PC-9 (cell line): ENCODE measurements at regions of chr11 and their contacts with region 1.

Region 1: GRCh38 chr11:59753650-59754493 is 1.3 kb upstream of the STX3 start:
- DNase-seq: peak; percentile 68 to 81
- H3K4me3 ChIP-seq: peak overlapping the region; percentile 92
- H3K27ac ChIP-seq: no peak overlapping the region
- H3K4me1 ChIP-seq: peaks cover 19% of the 10 kb centered on the region
- H3K27me3 ChIP-seq: no peaks in the 10 kb centered on the region
- CTCF ChIP-seq: peak; percentile 98

Region 2: DNA sequence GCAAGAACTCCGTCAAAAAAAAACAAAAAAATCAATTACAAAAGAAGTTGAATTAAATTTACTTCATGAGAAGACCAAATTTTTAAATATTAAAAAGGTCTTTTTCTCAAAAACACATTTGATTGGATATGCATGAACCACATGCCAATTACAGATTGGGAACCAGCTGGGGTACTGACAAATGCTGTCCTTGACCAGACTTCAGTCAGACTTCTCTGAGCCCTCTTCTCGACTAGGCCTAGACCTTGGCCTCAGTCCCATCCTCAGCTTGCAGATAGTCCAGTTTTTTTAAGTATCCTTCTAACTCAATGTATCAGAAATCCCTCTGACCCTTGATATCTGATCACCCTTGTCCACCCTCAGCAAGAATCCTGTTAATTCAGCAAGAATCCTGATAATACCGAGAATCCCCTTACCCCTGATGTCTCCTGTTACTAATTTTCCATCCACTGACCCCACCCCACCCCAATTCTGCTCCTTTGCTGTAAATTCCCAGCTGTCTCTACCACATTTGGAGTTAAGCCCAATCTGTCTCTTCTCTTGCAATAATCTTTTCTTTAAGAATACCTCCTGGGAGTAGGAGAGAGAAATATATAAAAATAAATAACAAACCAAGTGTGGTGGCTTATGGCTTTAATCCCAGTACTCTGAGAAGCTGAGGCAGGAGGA is 211.6 kb before region 1 on chr11:
- CTCF ChIA-PET with region 1: no interaction called
- POLR2A ChIA-PET with region 1: interaction called, 6 read pairs
- intact Hi-C with region 1: loop called (anchors 1 kb)
- DNase-seq: no peak
- H3K4me3 ChIP-seq: no peak overlapping the region
- H3K27ac ChIP-seq: no peak overlapping the region
- H3K4me1 ChIP-seq: 0 out of 2 replicates have a peak, but pooled peaks cover 13% of the 10 kb centered on the region
- H3K27me3 ChIP-seq: no peaks in the 10 kb centered on the region
- CTCF ChIP-seq: no peak

Region 3: DNA sequence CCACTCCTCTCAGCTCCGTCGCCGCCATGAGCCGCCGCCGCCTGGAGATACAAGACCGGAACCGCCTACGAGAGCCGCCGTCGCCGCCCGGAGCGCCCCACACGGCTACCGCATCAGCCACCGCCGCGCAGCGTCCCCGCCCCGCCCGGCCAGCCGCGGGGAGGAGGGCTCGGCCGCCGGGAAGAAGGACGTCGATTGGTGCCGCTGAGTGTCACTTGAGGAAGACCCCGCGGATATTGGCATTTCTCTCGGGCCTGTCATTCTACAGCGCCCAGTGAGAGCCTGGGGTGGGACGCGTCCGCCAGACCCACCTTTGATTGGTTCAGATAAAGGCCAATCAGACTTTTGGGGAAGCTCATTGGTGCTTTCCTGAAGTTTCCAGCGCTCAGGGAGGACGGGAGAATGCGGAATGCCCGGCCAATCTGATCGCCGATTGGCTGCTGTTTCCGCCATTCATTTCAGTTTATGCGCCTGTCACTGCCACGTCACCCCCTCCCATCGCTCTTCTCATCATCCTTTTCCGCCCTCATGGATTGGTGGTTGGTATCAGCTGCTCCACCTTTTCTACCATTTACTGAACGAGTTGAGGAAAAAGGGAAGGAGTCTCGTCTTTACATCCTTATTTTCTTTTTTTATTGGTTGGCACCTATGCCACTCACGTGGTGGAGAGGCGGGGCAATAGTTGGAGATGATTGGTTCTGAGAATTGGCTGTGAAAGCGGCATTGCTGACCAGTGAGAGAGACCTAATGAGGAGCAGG is 138.1 kb before region 1 on chr11 and contains the start of gene OSBP:
- CTCF ChIA-PET with region 1: no interaction called
- POLR2A ChIA-PET with region 1: interaction called, 30 read pairs
- intact Hi-C with region 1: loop called (anchors 2 kb)
- DNase-seq: peak; percentile 99 to 100
- H3K4me3 ChIP-seq: peak within 1 kb of the TSS; percentile 71
- H3K27ac ChIP-seq: peak within 1 kb of the TSS; percentile 67
- H3K4me1 ChIP-seq: peaks cover 37% of the 10 kb centered on the region
- H3K27me3 ChIP-seq: no peaks in the 10 kb centered on the region
- CTCF ChIP-seq: no peak
- total RNA-seq, gene OSBP: 40.4 and 49.7 TPM in 2 replicates

Region 4: GRCh38 chr11:59787816-59788215 is 33.9 kb after region 1 on chr11:
- CTCF ChIA-PET with region 1: no interaction called
- POLR2A ChIA-PET with region 1: interaction called, 7 read pairs
- intact Hi-C with region 1: loop called (anchors 1 kb)
- DNase-seq: no peak
- H3K4me3 ChIP-seq: peak overlapping the region; percentile 21; the same call in 1 of the 2 replicates
- H3K27ac ChIP-seq: peak overlapping the region; percentile 79
- H3K4me1 ChIP-seq: peaks cover 37% of the 10 kb centered on the region
- H3K27me3 ChIP-seq: no peaks in the 10 kb centered on the region
- CTCF ChIP-seq: no peak

Region 5: DNA sequence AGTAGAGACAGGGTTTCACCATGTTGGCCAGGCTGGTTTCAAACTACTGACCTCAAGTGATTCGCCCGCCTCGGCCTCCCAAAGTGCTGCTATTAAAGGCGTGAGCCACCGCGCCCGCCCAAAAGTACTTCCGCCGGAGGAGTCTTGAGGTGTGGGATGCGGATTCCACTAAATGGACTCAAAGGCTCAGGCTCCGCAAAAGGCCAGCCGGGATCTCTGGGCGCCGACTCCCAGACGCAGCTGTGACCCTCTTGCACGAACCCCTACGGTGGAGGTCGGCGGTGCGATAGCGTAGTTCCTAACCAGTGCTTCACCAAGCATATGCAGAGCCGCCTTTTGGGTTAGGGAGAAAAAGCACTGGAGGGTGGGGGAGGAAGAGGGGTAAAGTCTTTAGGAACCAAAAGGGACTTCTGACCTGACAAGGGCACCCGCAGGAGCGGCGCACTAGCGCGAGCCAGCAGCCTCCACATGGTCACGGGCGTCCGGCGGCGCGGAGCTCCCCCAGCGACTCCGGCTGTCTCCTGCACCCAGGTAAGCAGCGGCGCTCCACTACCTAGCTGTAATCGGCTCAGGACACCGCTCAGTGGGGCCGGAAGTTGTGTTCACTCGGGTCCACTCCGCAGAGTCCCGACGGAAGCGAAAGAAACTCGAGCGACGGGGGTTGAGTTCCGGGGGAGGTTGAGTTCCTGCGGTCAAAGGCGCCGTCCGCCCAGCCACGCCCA is 56.5 kb after region 1 on chr11 and contains the start of gene MRPL16:
- CTCF ChIA-PET with region 1: interaction called, 9 read pairs
- POLR2A ChIA-PET with region 1: no interaction called
- intact Hi-C with region 1: loop called (anchors 2 kb)
- DNase-seq: peak; percentile 89 to 92
- H3K4me3 ChIP-seq: peak within 1 kb of the TSS; percentile 73
- H3K27ac ChIP-seq: peak within 1 kb of the TSS; percentile 58
- H3K4me1 ChIP-seq: peaks cover 14% of the 10 kb centered on the region; the same call in 1 of the 2 replicates
- H3K27me3 ChIP-seq: no peaks in the 10 kb centered on the region
- CTCF ChIP-seq: peak; percentile 57; the same call in 1 of the 2 replicates
- total RNA-seq, gene MRPL16: 64.7 and 82.0 TPM in 2 replicates

Region 6: GRCh38 chr11:59918987-59919589 is 165.2 kb after region 1 on chr11:
- CTCF ChIA-PET with region 1: no interaction called
- POLR2A ChIA-PET with region 1: no interaction called
- intact Hi-C with region 1: loop called (anchors 1 kb)
- DNase-seq: peak; percentile 46 to 60
- H3K4me3 ChIP-seq: no peak overlapping the region
- H3K27ac ChIP-seq: no peak overlapping the region
- H3K4me1 ChIP-seq: no peaks in the 10 kb centered on the region
- H3K27me3 ChIP-seq: no peaks in the 10 kb centered on the region
- CTCF ChIP-seq: peak; percentile 78